Sigmoid colon (tissue), 7 donors: ENCODE measurements at regions of chr18 and their contacts with region 1.

Region 1: DNA sequence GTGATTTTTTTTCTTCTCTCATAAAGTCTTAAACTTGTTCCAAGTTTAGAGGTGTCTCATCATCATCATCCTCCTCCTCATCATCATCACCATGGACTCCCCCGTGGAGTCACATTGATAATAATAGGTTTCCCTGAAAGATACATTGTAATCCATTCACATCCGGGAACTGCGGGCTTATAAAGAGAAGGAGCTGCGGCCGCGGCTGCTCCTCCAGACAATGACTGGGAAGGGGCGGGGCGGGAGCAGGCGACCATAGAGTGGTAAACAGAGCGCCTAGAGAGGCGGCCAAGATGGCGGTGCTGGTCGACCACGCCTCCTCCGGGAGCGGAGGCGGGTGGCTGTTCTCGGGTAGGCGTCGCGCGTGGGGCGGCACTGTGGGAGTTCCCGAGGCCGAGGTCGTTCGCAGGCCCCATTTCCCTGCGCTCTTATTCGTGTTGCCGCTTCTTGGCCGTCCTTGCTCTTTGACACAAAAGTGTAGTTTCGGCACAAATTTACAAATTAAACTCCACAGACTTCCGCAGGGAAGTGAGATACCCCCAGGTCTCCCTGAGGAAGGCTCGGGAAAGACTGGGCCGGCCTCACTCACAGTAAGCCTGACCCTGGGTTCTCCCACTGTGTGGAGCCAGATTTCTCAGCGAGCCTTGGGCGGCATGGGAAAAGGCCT is 1.8 kb upstream of the TCF4 start:
- DNase-seq: peak; percentile 98
- H3K4me3 ChIP-seq: peak overlapping the region; percentile 57 to 77 (median 76)
- H3K27ac ChIP-seq: peak overlapping the region; percentile 83 to 92 (median 88)
- H3K4me1 ChIP-seq: peaks cover 0 to 21% (median 9%) of the 10 kb centered on the region in 4 donors
- H3K27me3 ChIP-seq: no peaks in the 10 kb centered on the region
- CTCF ChIP-seq: no peak
- EP300 ChIP-seq: peak in 1 of 4 donors; percentile 38
- POLR2A ChIP-seq: peak; percentile 15 to 20

Region 2: GRCh38 chr18:55322178-55322735 is 267.5 kb before region 1 on chr18:
- intact Hi-C with region 1: loop called (anchors 2 kb)
- DNase-seq: peak; percentile 96
- H3K4me3 ChIP-seq: peak overlapping the region; percentile 48 to 63 (median 56)
- H3K27ac ChIP-seq: peak overlapping the region; percentile 88 to 98 (median 90)
- H3K4me1 ChIP-seq: peaks cover 0 to 36% (median 25%) of the 10 kb centered on the region in 4 donors
- H3K27me3 ChIP-seq: no peaks in the 10 kb centered on the region
- CTCF ChIP-seq: no peak
- EP300 ChIP-seq: peak in 1 of 4 donors; percentile 25
- POLR2A ChIP-seq: peak; percentile 26 to 59

Region 3: DNA sequence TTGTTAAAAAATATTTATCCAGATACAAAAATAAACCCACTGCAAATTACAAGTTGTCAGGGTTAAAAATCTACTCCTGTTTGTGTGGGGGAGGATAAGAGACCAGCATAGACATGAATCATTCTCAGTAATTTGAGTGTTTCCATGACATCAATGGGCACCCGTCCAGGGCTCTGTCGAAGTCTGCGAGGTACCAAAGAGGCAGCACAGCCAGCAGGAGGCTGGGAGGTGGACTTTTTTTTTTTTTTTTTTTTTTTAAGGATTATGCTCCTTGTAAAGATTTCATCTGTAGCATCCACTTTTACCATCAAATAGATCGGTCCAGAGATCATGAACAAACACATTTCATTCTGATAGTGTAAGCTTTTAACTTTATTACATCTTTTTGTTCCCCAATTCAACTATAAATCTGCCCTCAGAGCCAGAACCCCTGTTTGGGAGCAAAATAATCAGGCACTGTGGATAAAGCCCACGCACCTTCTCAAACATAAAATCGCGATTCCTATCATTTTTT is 183.8 kb before region 1 on chr18:
- intact Hi-C with region 1: loop called (anchors 5 kb)
- DNase-seq: peak; percentile 92
- H3K4me3 ChIP-seq: no peak overlapping the region
- H3K27ac ChIP-seq: peak overlapping the region; percentile 73 to 83 (median 78)
- H3K4me1 ChIP-seq: peaks cover 0 to 42% (median 16%) of the 10 kb centered on the region in 4 donors
- H3K27me3 ChIP-seq: no peaks in the 10 kb centered on the region
- CTCF ChIP-seq: peak in 1 of 4 experiments; percentile 37
- EP300 ChIP-seq: peak in 2 of 4 donors; percentile 5 to 26
- POLR2A ChIP-seq: no peak

Region 4: GRCh38 chr18:55477499-55477859 is 112.3 kb before region 1 on chr18:
- intact Hi-C with region 1: loop called (anchors 5 kb)
- DNase-seq: no peak
- H3K4me3 ChIP-seq: peak overlapping the region; percentile 35 to 55 (median 51)
- H3K27ac ChIP-seq: peak overlapping the region; percentile 77 to 84 (median 82)
- H3K4me1 ChIP-seq: peaks cover 0 to 26% (median 12%) of the 10 kb centered on the region in 4 donors
- H3K27me3 ChIP-seq: no peaks in the 10 kb centered on the region
- CTCF ChIP-seq: peak in 1 of 4 experiments; percentile 39
- EP300 ChIP-seq: no peak
- POLR2A ChIP-seq: no peak

Region 5: DNA sequence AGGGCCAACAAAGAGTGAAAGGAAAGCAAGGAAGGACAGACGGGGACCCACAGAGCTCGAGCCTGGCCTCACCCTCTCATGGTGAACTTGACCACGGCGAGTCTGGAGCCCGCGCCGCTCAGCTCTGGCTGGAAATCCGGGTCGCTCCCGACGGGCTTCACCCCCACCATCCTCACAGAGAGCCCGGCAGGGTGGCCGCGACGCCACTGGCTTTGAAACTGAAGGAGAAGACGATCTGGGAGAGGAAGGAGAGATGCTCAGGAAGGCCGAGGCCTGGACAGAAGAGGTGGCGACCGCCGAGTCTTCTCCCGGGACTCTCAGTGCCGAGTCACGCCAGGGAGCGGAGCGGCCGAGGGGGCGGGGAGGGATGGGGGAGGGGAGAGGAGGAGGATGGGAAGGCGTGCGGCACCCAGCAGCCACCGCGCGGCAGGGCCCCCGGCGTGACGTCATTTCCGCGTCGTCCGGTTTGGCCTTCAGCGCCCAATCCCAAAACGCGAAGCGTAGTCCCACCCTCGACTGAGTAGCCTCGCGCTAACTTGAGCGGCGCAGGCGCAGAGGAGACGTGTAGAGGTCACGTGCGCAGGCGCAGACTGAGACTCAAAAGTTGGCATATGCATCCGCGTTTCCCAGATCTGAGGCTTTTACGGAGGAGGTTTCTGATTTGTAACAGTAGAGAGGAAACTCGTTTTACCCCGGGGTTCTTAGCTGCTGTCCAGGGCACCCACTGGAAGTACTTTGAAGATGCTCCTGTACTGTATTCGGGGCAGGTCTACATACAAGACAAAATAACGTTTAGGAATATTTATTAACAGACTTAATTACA is 1048.7 kb after region 1 on chr18 and contains the start of gene TXNL1:
- intact Hi-C with region 1: loop called (anchors 5 kb)
- DNase-seq: peak; percentile 100
- H3K4me3 ChIP-seq: peak within 1 kb of the TSS; percentile 86 to 93 (median 91)
- H3K27ac ChIP-seq: peak within 1 kb of the TSS; percentile 93 to 99 (median 97)
- H3K4me1 ChIP-seq: peaks cover 0 to 37% (median 27%) of the 10 kb centered on the region in 4 donors
- H3K27me3 ChIP-seq: no peaks in the 10 kb centered on the region
- CTCF ChIP-seq: no peak
- EP300 ChIP-seq: peak in 2 of 4 donors; percentile 45 to 81
- POLR2A ChIP-seq: peak; percentile 81 to 85
- total RNA-seq, gene TXNL1: 39.8 to 47.9 (median 46.1) TPM